CD4-positive, alpha-beta memory T cell (primary cell): ENCODE measurements at regions of chr9 and their contacts with region 1.

Region 1: DNA sequence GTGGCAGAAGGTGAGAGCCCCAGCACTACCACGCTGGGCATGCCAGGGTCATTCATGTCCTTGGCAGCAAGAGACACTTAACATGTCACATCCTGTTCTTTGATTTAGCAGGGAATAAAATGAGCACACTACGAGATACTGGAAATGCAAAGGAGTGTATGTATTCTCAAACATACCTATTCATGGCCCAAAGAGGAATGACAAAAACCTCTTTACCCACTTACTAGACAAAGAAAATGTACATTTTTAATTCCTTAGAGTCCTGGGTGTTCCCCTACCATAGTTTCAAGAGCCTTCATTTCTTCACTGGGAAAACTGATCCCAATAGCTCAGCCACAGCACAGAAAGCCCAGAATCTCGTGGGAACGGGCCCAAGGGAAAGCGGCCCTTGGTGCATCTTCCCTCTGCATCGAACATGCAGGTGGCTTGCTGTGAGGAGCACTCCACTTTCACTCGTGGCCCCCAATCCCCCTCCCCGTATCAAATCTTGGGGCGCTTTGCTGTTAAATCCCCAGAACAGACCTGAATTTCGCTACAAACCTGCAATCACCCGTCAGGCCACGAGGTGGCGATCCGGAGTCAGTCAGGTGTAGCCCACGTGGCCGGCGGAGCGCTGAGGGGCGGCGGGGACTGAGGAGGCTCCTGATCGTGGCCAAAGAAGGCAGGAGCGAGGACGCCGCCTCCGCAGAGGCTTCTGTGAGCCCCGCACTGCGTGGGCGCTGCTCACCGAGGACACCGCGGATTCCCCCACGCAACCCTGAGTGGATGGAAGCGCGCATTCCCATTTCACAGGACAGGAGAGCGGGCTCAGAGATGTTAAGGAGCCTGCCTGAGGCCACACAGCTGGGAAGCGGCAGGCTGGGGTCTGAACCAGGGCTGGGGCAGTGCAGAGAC is 91.4 kb downstream of the LMX1B start:
- DNase-seq: peak; percentile 77 to 82 (median 81)
- H3K4me3 ChIP-seq: no peak overlapping the region
- H3K4me3 Mint-ChIP-seq: peak overlapping the region; percentile 17 to 79 (median 53)
- H3K27ac ChIP-seq: no peak overlapping the region
- H3K27ac Mint-ChIP-seq: peak overlapping the region in 4 of 7 donors; percentile 9 to 53 (median 30)
- H3K4me1 ChIP-seq: peaks cover 17% of the 10 kb centered on the region
- H3K4me1 Mint-ChIP-seq: peaks cover 7 to 21% (median 14%) of the 10 kb centered on the region in 4 donors
- H3K27me3 ChIP-seq: peaks cover 10% of the 10 kb centered on the region
- H3K27me3 Mint-ChIP-seq: peaks cover 14 to 18% of the 10 kb centered on the region in 2 donors

Region 2: DNA sequence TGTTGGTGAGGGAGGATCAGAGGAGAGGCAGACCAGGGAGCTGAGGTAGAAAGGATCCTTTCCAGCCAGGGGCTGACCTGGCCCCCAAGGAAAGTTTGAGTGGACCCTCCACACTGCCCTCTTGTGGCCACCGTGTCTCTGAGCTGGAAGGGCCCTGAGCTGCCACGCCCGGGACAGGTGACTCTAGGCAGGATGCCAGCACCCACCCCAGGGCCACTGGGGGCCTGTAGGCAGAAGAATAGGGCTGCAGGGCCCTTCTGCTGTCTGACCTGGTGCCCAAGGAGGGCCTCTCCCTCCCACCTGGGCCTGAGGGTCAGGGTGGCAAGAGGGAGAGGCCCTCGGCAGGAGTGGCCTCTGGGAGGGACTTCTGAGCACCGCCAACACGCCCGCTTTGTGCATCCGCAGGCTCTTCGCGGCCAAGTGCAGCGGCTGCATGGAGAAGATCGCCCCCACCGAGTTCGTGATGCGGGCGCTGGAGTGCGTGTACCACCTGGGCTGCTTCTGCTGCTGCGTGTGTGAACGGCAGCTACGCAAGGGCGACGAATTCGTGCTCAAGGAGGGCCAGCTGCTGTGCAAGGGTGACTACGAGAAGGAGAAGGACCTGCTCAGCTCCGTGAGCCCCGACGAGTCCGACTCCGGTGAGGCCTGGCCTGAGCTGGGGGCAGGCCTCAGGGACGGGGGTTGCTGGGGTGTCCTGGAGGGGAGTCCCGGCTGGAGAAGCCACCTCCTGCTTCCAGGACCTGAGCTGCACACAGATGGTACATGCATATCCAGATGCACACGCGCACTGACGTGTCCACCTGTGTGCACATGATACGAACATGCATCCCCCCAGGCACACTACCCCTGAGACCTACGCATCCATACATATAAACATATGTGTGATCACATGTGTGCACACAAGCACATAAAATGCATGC is 14.4 kb before region 1 on chr9:
- CTCF ChIA-PET with region 1: interaction called, 13 read pairs
- POLR2A ChIA-PET with region 1: interaction called, 3 read pairs
- intact Hi-C with region 1: no loop called
- DNase-seq: peak in 4 of 5 donors; percentile 27 to 37 (median 32)
- H3K4me3 ChIP-seq: no peak overlapping the region
- H3K4me3 Mint-ChIP-seq: no peak overlapping the region
- H3K27ac ChIP-seq: no peak overlapping the region
- H3K27ac Mint-ChIP-seq: no peak overlapping the region
- H3K4me1 ChIP-seq: no peaks in the 10 kb centered on the region
- H3K4me1 Mint-ChIP-seq: no peaks in the 10 kb centered on the region
- H3K27me3 ChIP-seq: no peaks in the 10 kb centered on the region
- H3K27me3 Mint-ChIP-seq: peaks cover 26 to 33% of the 10 kb centered on the region in 2 donors

Region 3: DNA sequence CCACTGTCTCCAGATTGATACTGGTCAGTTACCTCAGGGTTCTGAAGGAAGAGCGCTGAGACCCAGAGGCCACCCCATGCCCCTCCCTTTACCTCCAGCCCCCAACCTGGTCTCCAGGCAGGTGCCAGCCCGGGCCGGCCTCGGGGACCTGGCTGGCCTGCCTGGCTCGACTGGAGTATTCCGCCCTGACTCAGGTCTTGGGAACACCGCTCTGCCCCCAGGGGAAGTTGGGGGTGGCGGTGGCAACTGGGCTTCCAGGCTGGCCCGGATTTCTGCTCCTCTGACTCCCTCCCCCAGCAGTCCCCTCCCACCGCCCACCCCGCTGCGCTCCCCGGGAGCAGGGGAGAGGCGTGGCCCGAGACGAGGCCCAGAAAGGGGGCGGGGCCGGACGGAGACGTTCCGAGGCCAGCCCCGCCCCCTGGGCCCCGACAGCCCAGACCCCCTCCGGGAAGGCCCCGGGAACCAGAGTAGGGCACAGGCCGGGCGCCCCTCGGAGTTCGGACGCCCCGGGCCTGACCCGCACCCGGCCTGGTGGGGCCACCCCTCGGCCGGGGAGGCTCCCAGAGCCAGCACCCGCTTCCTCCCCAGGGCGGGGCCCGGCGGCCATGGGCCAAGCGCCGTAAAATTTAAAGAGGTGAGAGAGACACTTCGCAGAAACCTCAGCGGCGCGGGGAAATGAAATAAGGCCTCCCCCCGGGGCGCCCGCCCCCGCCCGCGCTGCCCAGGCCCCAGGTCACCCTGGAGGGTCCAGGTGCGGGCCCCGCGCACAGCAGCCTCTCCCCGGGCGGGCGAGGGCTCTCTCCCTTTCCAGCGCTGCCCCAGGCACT is 17.3 kb after region 1 on chr9:
- CTCF ChIA-PET with region 1: interaction called, 61 read pairs
- POLR2A ChIA-PET with region 1: interaction called, 42 read pairs
- intact Hi-C with region 1: loop called (anchors 1 kb)
- DNase-seq: peak; percentile 84 to 89 (median 85)
- H3K4me3 ChIP-seq: peak overlapping the region; percentile 29 to 80
- H3K4me3 Mint-ChIP-seq: peak overlapping the region; percentile 86 to 96 (median 90)
- H3K27ac ChIP-seq: peak overlapping the region; percentile 89
- H3K27ac Mint-ChIP-seq: peak overlapping the region; percentile 94 to 99 (median 98)
- H3K4me1 ChIP-seq: peaks cover 40% of the 10 kb centered on the region
- H3K4me1 Mint-ChIP-seq: peaks cover 34 to 55% (median 42%) of the 10 kb centered on the region in 4 donors
- H3K27me3 ChIP-seq: no peaks in the 10 kb centered on the region
- H3K27me3 Mint-ChIP-seq: no peaks in the 10 kb centered on the region

Region 4: GRCh38 chr9:126745574-126746411 is 40.7 kb after region 1 on chr9:
- CTCF ChIA-PET with region 1: interaction called, 37 read pairs
- POLR2A ChIA-PET with region 1: no interaction called
- intact Hi-C with region 1: no loop called
- DNase-seq: no peak
- H3K4me3 ChIP-seq: no peak overlapping the region
- H3K4me3 Mint-ChIP-seq: no peak overlapping the region
- H3K27ac ChIP-seq: no peak overlapping the region
- H3K27ac Mint-ChIP-seq: peak overlapping the region in 3 of 7 donors; percentile 13 to 23 (median 22)
- H3K4me1 ChIP-seq: peaks cover 11% of the 10 kb centered on the region
- H3K4me1 Mint-ChIP-seq: peaks cover 17 to 30% (median 18%) of the 10 kb centered on the region in 4 donors
- H3K27me3 ChIP-seq: no peaks in the 10 kb centered on the region
- H3K27me3 Mint-ChIP-seq: peaks cover 3% of the 10 kb centered on the region in 2 donors

Region 5: GRCh38 chr9:126781186-126782052 is 76.3 kb after region 1 on chr9:
- CTCF ChIA-PET with region 1: interaction called, 587 read pairs
- POLR2A ChIA-PET with region 1: interaction called, 40 read pairs
- intact Hi-C with region 1: loop called (anchors 1 kb)
- DNase-seq: peak; percentile 68 to 79 (median 76)
- H3K4me3 ChIP-seq: no peak overlapping the region
- H3K4me3 Mint-ChIP-seq: no peak overlapping the region
- H3K27ac ChIP-seq: no peak overlapping the region
- H3K27ac Mint-ChIP-seq: no peak overlapping the region
- H3K4me1 ChIP-seq: peaks cover 5% of the 10 kb centered on the region
- H3K4me1 Mint-ChIP-seq: peaks cover 0 to 4% (median 2%) of the 10 kb centered on the region in 4 donors
- H3K27me3 ChIP-seq: no peaks in the 10 kb centered on the region
- H3K27me3 Mint-ChIP-seq: peaks cover 11 to 23% of the 10 kb centered on the region in 2 donors

Region 6: DNA sequence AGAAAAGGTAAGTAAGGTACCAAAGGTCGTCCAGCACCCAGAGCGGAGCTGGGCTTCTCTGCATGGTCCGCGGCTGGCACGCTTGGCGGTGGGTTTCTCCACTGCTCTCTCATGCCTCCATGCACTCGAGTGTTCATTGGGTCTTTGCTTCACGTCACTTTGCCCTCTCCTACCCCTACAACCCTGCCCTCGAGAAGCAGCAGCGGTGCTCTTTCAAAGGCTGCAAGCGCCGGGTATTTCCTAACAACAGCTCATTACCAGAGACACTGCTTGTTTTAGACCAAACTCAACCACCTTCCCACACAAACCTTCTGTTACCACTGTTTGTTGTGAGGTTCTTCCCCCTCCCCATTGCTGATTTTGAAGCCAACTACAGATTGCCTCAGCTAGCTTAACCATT is 133.8 kb after region 1 on chr9:
- CTCF ChIA-PET with region 1: no interaction called
- POLR2A ChIA-PET with region 1: no interaction called
- intact Hi-C with region 1: no loop called
- DNase-seq: no peak
- H3K4me3 ChIP-seq: no peak overlapping the region
- H3K4me3 Mint-ChIP-seq: no peak overlapping the region
- H3K27ac ChIP-seq: no peak overlapping the region
- H3K27ac Mint-ChIP-seq: peak overlapping the region in 2 of 7 donors; percentile 62 to 71
- H3K4me1 ChIP-seq: no peaks in the 10 kb centered on the region
- H3K4me1 Mint-ChIP-seq: peaks cover 11 to 31% (median 20%) of the 10 kb centered on the region in 4 donors
- H3K27me3 ChIP-seq: no peaks in the 10 kb centered on the region
- H3K27me3 Mint-ChIP-seq: no peaks in the 10 kb centered on the region